HCT116 (cell line): ENCODE measurements at regions of chr11 and their contacts with region 1.

Region 1: GRCh38 chr11:9384535-9385303 is at the start of gene IPO7:
- DNase-seq: peak; percentile 80
- ATAC-seq: peak; percentile 92
- H3K4me3 ChIP-seq: peak within 1 kb of the TSS; percentile 95 to 97
- H3K27ac ChIP-seq: peak within 1 kb of the TSS; percentile 96
- H3K4me1 ChIP-seq: peaks cover 10 to 44% of the 10 kb centered on the region in 2 experiments
- H3K27me3 ChIP-seq: no peaks in the 10 kb centered on the region
- CTCF ChIP-seq: peak; percentile 3 to 30 (median 10); a peak in 2 of 6 replicates
- POLR2A ChIP-seq: peak; percentile 76
- RAD21 ChIP-seq: peak; percentile 6; the same call in 1 of the 2 replicates
- total RNA-seq, gene IPO7: 186 TPM

Region 2: GRCh38 chr11:9314291-9315036 is 70.3 kb before region 1 on chr11 and contains the start of gene TMEM41B:
- CTCF ChIA-PET with region 1: no interaction called
- POLR2A ChIA-PET with region 1: interaction called, 4 read pairs
- RAD21 ChIA-PET with region 1: interaction called in 1 of 2 experiments, 3 read pairs
- intact Hi-C with region 1: loop called (anchors 2 kb)
- DNase-seq: peak; percentile 97
- ATAC-seq: peak; percentile 96
- H3K4me3 ChIP-seq: peak within 1 kb of the TSS; percentile 96 to 97
- H3K27ac ChIP-seq: peak within 1 kb of the TSS; percentile 84
- H3K4me1 ChIP-seq: peaks cover 26 to 35% of the 10 kb centered on the region in 2 experiments; a peak in 3 of 4 replicates
- H3K27me3 ChIP-seq: no peaks in the 10 kb centered on the region
- CTCF ChIP-seq: no peak
- POLR2A ChIP-seq: peak; percentile 71
- RAD21 ChIP-seq: peak; percentile 34; the same call in 1 of the 2 replicates
- total RNA-seq, gene TMEM41B: 67.2 TPM

Region 3: DNA sequence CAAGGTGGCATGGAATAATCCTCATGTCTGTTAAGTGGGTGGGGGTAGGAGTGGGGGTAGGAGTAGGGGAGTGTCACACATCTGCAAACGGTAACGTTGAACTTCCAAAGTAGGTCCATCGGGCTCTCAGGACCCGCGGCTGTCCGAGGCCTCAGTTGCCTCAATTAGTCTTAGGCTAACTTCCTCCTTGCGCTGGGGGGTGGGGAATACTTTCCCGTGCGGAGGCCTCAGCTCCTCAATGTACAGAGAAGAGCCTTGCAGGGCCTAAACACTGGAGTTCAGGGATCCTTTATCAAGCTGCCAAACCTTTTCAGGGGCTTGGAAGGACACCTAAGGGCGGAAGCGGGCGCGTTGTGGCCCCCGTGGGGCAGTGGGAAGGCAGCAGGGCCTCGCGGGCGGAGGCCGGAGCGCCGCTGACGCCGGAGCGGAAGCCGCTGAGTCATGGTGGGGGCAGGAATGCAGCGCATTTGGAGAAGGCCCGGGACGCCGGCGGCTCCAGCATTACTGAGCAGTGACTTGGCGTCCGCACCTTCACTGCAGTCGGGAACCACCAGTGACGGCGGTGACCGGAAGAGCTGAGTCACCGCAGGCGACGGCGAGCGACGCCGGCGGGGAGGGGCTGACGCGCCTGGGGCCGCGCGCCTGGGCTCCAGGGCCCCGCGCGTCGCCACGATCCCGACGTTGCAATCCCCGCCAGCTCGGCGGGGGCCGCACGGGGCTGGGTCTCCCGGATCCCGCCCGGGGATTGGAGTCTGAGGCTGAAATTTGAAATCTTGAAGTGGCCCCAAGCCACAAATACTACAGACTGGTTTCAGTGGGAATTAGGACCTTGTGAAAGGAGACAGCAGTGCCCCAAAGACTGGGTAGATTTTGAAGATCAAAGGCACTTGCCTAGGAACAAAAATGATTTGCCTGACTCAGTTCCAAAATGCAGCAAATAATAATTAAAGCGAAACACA is 20.5 kb before region 1 on chr11:
- CTCF ChIA-PET with region 1: no interaction called
- POLR2A ChIA-PET with region 1: interaction called, 10 read pairs
- RAD21 ChIA-PET with region 1: no interaction called
- intact Hi-C with region 1: loop called (anchors 2 kb)
- DNase-seq: peak; percentile 97
- ATAC-seq: peak; percentile 88
- H3K4me3 ChIP-seq: peak overlapping the region; percentile 34 to 44
- H3K27ac ChIP-seq: peak overlapping the region; percentile 99
- H3K4me1 ChIP-seq: peaks cover 34 to 48% of the 10 kb centered on the region in 2 experiments
- H3K27me3 ChIP-seq: no peaks in the 10 kb centered on the region
- CTCF ChIP-seq: no peak
- POLR2A ChIP-seq: peak; percentile 8
- RAD21 ChIP-seq: peak; percentile 50

Region 4: DNA sequence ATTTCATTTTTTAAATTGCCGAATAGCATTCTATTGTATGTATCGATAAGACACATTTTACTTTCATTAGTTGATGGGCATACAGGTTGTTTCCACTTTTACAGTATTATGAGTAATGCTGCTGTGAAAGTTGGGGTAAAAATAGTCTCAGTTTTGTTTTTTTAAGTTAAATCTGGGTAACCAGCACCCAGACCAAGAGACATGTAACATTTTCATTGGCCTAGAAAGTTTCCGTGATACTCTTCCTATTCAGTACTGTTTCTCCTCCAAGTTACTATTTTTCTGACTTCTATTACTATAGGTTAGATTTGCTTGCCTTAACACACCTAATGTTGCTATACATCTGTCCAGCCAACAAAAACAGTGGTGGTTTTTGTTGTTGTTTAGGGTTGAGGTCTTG is 12.0 kb after region 1 on chr11:
- CTCF ChIA-PET with region 1: no interaction called
- POLR2A ChIA-PET with region 1: interaction called, 12 read pairs
- RAD21 ChIA-PET with region 1: no interaction called
- intact Hi-C with region 1: no loop called
- DNase-seq: no peak
- ATAC-seq: no peak
- H3K4me3 ChIP-seq: no peak overlapping the region
- H3K27ac ChIP-seq: no peak overlapping the region
- H3K4me1 ChIP-seq: peaks cover 0 to 22% of the 10 kb centered on the region in 2 experiments; a peak in 1 of 4 replicates
- H3K27me3 ChIP-seq: no peaks in the 10 kb centered on the region
- CTCF ChIP-seq: no peak
- POLR2A ChIP-seq: no peak
- RAD21 ChIP-seq: no peak